WTC11 (cell line): ENCODE measurements at regions of chr17 and their contacts with region 1.

Region 1: DNA sequence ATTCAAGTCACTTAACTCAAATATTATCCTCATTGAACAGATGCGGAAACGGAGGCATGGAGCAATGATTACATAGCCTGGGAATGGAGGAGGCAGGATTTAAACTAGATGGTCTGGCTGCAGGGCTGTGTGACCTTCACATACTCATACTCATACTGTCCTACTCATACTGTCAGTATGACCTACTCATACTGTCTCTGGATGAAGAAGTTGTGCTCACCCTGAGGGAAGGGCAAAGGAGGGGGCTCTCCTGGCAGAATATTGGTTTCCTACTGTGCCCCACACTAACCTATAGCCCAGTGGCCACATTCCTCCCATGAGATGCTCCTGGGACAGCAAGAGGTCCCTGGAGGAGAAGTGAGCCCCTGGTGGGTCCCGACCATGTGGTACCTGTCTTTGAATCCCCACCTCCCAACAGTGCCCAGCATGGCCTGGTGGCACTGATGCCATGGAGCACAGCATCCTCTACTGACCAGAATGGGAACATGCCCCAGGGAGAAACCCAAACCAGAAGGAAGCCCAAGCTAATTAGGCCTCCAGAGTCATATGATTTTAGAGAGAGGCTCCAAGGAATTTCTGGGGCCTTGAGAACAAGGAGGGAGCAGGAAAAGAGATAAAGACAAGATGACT is 197.3 kb upstream of the SDK2 start:
- DNase-seq: peak; percentile 54
- ATAC-seq: peak; percentile 93
- H3K4me3 Mint-ChIP-seq: no peak overlapping the region
- H3K27ac Mint-ChIP-seq: no peak overlapping the region
- H3K4me1 Mint-ChIP-seq: peaks cover 2% of the 10 kb centered on the region; the same call in 1 of the 2 replicates
- H3K27me3 Mint-ChIP-seq: peaks cover 4% of the 10 kb centered on the region
- CTCF ChIP-seq: peak; percentile 50

Region 2: GRCh38 chr17:73710095-73710592 is 131.4 kb before region 1 on chr17:
- CTCF ChIA-PET with region 1: interaction called, 11 read pairs
- POLR2A ChIA-PET with region 1: no interaction called
- DNase-seq: peak; percentile 87
- ATAC-seq: peak; percentile 82
- H3K4me3 Mint-ChIP-seq: no peak overlapping the region
- H3K27ac Mint-ChIP-seq: 0 out of 2 replicates have a peak overlapping the region, but pooled peaks have one; percentile 29
- H3K4me1 Mint-ChIP-seq: peaks cover 13% of the 10 kb centered on the region
- H3K27me3 Mint-ChIP-seq: peaks cover 12% of the 10 kb centered on the region; the same call in 1 of the 2 replicates
- CTCF ChIP-seq: peak; percentile 90

Region 3: GRCh38 chr17:73827627-73828291 is 13.8 kb before region 1 on chr17:
- CTCF ChIA-PET with region 1: interaction called, 11 read pairs
- POLR2A ChIA-PET with region 1: no interaction called
- DNase-seq: no peak
- ATAC-seq: peak; percentile 78
- H3K4me3 Mint-ChIP-seq: 0 out of 2 replicates have a peak overlapping the region, but pooled peaks have one; percentile 16
- H3K27ac Mint-ChIP-seq: peak overlapping the region; percentile 28
- H3K4me1 Mint-ChIP-seq: peaks cover 61% of the 10 kb centered on the region
- H3K27me3 Mint-ChIP-seq: peaks cover 60% of the 10 kb centered on the region
- CTCF ChIP-seq: no peak